Adrenal gland (tissue), 19 donors: ENCODE measurements at regions of chr3 and their contacts with region 1.

Region 1: GRCh38 chr3:29525254-29525881 is 244.5 kb downstream of the RBMS3 start:
- DNase-seq: peak; percentile 24 to 84 (median 54)
- H3K4me3 ChIP-seq: no peak overlapping the region
- H3K27ac ChIP-seq: peak overlapping the region in 3 of 5 donors; percentile 2 to 70 (median 53)
- H3K4me1 ChIP-seq: peaks cover 0 to 32% of the 10 kb centered on the region in 2 donors
- H3K27me3 ChIP-seq: no peaks in the 10 kb centered on the region
- CTCF ChIP-seq: no peak
- POLR2A ChIP-seq: no peak

Region 2: DNA sequence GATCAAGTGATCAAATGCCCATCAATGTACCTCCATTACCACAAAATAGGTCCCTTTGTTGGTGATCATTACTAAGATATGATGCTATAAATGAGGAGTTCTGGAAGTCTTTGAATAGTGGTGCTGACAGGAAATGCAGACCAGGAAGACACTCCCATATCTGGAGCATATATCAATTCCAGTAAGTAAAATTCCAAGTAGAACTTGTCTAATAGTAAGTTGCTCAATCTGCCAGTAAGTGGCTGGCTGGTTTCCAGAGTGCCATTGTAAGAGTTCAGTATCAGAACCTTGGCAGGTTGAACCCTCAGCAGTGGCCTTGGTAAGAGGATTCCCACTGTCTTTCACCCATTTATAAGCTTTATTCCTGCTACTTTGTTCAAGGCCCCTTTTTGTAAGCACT is 624.4 kb before region 1 on chr3:
- intact Hi-C with region 1: no loop called
- DNase-seq: peak; percentile 33 to 94 (median 80)
- H3K4me3 ChIP-seq: no peak overlapping the region
- H3K27ac ChIP-seq: peak overlapping the region in 2 of 5 donors; percentile 41 to 50
- H3K4me1 ChIP-seq: peaks cover 0 to 11% of the 10 kb centered on the region in 2 donors
- H3K27me3 ChIP-seq: no peaks in the 10 kb centered on the region
- CTCF ChIP-seq: no peak
- POLR2A ChIP-seq: no peak

Region 3: DNA sequence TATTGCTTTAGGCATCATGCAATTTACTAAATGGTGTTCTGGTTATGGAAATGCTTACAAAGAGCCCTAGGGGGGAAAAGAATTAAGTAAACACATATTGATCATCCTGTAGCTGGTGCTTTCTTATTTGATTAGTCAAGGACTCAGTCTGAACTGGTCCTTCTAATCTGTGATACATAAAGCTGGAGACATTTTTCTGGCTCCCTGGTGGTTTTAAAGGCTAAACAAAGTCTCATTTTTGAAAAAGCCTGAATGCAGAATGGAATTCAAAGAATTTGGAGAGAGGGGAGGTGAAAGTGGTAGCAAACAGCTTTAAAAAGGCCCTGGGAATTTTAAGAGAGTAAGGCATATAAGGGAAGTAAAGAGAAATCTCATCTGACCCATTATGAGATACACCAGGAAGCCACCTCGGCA is 94.8 kb before region 1 on chr3:
- intact Hi-C with region 1: no loop called
- DNase-seq: no peak
- H3K4me3 ChIP-seq: no peak overlapping the region
- H3K27ac ChIP-seq: peak overlapping the region in 2 of 5 donors; percentile 24 to 26
- H3K4me1 ChIP-seq: peaks cover 0 to 33% of the 10 kb centered on the region in 2 donors
- H3K27me3 ChIP-seq: no peaks in the 10 kb centered on the region
- CTCF ChIP-seq: no peak
- POLR2A ChIP-seq: no peak

Region 4: DNA sequence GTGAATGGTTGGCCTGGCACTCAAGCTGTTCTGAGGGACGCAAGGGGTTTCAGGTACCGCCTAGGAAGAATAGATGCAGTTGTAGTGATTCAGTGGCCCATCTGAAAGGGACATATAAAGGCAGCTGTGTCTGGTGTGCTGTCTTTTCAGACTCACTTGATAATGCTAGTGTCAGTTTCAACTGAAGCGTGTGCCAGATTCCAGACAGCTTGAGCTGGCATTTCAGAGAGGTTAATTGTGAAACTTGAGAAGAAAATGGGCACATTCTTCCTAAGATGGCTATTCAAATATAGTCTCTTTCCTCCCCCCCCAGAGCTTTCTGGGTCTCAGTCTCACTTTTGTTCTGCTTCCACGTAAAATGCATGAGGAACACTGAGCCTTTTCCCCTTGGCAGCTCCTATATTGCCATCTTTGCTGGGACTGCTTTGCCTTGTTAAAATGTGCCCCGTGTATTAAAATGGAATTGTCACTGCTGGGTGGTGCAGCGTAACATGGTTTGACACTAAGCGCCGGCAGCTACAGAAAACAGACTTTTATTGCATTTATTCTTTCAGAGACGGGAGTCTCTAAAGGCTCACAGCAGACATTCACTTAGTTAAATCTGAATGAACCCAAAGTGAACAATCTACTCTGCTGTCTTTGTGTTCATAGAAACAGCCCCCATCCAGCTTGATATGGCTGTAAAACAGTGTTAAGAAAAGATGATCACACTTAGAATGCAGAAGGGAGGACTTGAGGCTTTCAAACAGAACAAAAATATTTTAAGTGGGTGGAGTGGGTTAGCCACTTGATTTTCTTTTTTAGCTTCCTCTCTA is 234.2 kb after region 1 on chr3:
- intact Hi-C with region 1: loop called in 1 of 2 experiments (anchors 10 kb)
- DNase-seq: peak in 3 of 7 donors; percentile 11 to 31 (median 17)
- H3K4me3 ChIP-seq: no peak overlapping the region
- H3K27ac ChIP-seq: peak overlapping the region; percentile 8 to 80 (median 51)
- H3K4me1 ChIP-seq: peaks cover 20 to 47% of the 10 kb centered on the region in 2 donors
- H3K27me3 ChIP-seq: no peaks in the 10 kb centered on the region
- CTCF ChIP-seq: no peak
- POLR2A ChIP-seq: no peak